ENCODE measurements at regions of chr2 and their contacts with region 1.

Region 1: DNA sequence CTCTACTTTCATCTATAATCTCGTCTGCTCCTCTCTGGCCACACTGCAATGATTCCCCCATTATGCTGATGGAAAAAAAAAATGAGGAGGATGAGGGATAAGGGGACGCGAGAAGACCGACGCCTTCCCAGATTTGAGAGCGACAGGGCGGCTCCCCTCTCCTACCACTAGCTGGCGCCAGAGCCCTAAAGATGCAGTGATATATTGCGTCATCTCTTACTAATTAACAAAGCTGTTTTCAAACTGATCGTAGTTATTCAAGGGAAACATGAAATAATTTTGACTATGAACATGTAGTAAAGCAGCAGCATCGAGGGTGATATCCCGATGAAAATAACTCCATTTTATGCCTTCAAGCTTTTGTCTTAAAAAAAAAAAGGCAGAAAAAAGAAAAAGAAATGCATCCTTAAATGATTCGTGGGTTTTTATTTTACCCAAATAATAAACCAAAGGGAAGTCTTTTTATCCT is 48.0 kb upstream of the HNRNPA3 start:
- DNase-seq: peak; percentile 65
- H3K4me3 Mint-ChIP-seq: no peak overlapping the region
- H3K27ac Mint-ChIP-seq: no peak overlapping the region
- H3K4me1 Mint-ChIP-seq: peaks cover 28% of the 10 kb centered on the region
- H3K27me3 Mint-ChIP-seq: peaks cover 6% of the 10 kb centered on the region

Region 2: GRCh38 chr2:176852667-176853066 is 312.0 kb before region 1 on chr2:
- intact Hi-C with region 1: no loop called
- DNase-seq: peak; percentile 26
- H3K4me3 Mint-ChIP-seq: no peak overlapping the region
- H3K27ac Mint-ChIP-seq: no peak overlapping the region
- H3K4me1 Mint-ChIP-seq: peaks cover 41% of the 10 kb centered on the region
- H3K27me3 Mint-ChIP-seq: peaks cover 2% of the 10 kb centered on the region

Region 3: DNA sequence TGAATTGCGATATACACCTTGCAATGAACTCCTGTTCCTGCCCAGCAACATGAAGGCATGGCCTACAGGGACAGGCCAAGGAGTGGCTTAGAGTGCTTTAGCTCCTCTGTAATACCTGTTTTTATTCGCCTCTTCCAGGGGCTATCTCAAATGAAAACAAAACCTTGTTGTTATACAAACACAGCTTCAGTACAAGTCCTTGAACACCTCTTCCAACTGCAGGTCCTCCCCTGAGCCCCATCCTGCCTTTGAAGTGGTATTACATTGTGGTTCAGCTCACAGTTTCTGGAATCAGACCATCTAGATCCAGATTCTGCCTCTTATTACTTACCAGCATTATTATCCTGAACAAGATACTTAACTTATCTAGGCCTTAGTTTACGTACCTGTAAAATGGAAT is 35.0 kb before region 1 on chr2:
- intact Hi-C with region 1: no loop called
- DNase-seq: no peak
- H3K4me3 Mint-ChIP-seq: no peak overlapping the region
- H3K27ac Mint-ChIP-seq: no peak overlapping the region
- H3K4me1 Mint-ChIP-seq: peaks cover 3% of the 10 kb centered on the region
- H3K27me3 Mint-ChIP-seq: peaks cover 7% of the 10 kb centered on the region

Region 4: DNA sequence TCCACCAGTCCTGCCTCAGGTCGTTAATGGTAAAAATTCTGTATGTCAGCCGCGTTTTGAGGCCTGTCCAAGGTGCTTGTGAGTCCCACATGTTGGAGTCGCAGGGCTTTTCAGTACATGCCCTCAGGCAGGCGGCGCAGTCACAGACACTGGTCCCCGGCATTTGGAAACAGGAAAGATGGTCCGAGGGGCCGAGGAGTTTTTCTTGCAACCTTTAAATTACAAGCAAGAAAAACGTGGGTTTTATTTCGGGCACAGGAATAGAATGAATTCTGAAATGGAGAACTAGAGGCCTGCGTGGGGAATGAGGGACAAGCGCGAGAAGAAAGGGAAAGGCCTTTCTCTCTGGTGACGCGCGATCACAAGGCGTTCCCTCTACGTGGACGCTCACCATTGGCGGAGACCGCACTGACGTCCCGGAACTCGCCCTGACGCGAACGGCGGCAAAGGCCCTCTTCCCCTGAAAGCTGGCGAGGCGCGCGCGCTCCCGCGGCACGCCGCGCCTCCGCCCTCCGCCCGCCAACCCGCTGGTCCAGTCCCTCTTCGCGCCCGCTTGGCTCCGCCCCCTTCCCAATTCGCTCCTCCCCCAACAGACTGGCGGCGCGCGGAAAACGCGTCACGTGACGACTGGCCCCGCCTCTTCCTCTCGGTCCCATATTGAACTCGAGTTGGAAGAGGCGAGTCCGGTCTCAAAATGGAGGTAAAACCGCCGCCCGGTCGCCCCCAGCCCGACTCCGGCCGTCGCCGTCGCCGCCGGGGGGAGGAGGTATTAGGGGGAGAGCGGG is 47.7 kb after region 1 on chr2 and contains the start of gene HNRNPA3:
- intact Hi-C with region 1: loop called (anchors 1 kb)
- DNase-seq: peak; percentile 100
- H3K4me3 Mint-ChIP-seq: peak within 1 kb of the TSS; percentile 96
- H3K27ac Mint-ChIP-seq: peak within 1 kb of the TSS; percentile 100
- H3K4me1 Mint-ChIP-seq: peaks cover 33% of the 10 kb centered on the region
- H3K27me3 Mint-ChIP-seq: no peaks in the 10 kb centered on the region
- total RNA-seq, gene HNRNPA3: 322 and 323 TPM in 2 replicates

Region 5: GRCh38 chr2:177289824-177290628 is 125.4 kb after region 1 on chr2:
- intact Hi-C with region 1: loop called (anchors 1 kb)
- DNase-seq: peak; percentile 37
- H3K4me3 Mint-ChIP-seq: peak overlapping the region; percentile 61
- H3K27ac Mint-ChIP-seq: peak overlapping the region; percentile 79
- H3K4me1 Mint-ChIP-seq: peaks cover 46% of the 10 kb centered on the region
- H3K27me3 Mint-ChIP-seq: no peaks in the 10 kb centered on the region

Region 6: GRCh38 chr2:177383935-177384334 is 219.3 kb after region 1 on chr2:
- intact Hi-C with region 1: no loop called
- DNase-seq: no peak
- H3K4me3 Mint-ChIP-seq: no peak overlapping the region
- H3K27ac Mint-ChIP-seq: no peak overlapping the region
- H3K4me1 Mint-ChIP-seq: peaks cover 4% of the 10 kb centered on the region
- H3K27me3 Mint-ChIP-seq: no peaks in the 10 kb centered on the region

Region 7: GRCh38 chr2:177618255-177619253 is 453.9 kb after region 1 on chr2:
- intact Hi-C with region 1: loop called (anchors 10 kb)
- DNase-seq: peak; percentile 88
- H3K4me3 Mint-ChIP-seq: peak overlapping the region; percentile 92
- H3K27ac Mint-ChIP-seq: peak overlapping the region; percentile 97
- H3K4me1 Mint-ChIP-seq: peaks cover 4% of the 10 kb centered on the region
- H3K27me3 Mint-ChIP-seq: peaks cover 27% of the 10 kb centered on the region

Region 8: GRCh38 chr2:177763532-177764265 is 599.1 kb after region 1 on chr2:
- intact Hi-C with region 1: loop called (anchors 5 kb)
- DNase-seq: peak; percentile 57
- H3K4me3 Mint-ChIP-seq: no peak overlapping the region
- H3K27ac Mint-ChIP-seq: no peak overlapping the region
- H3K4me1 Mint-ChIP-seq: peaks cover 3% of the 10 kb centered on the region
- H3K27me3 Mint-ChIP-seq: peaks cover 26% of the 10 kb centered on the region

Measured in activated T-helper 2 cell treated with anti-CD3 and anti-CD28 coated beads, Interferon-gamma antibody, Interleukin-2, Interleukin-4, amounts not matched to agents 10 μg/mL and 5 μg/mL and 100 μg/mL, durations not matched to agents 14 hours and 24 hours and 36 hours (primary cell).